H1 (cell line): ENCODE measurements at regions of chr9 and their contacts with region 1.

Region 1: DNA sequence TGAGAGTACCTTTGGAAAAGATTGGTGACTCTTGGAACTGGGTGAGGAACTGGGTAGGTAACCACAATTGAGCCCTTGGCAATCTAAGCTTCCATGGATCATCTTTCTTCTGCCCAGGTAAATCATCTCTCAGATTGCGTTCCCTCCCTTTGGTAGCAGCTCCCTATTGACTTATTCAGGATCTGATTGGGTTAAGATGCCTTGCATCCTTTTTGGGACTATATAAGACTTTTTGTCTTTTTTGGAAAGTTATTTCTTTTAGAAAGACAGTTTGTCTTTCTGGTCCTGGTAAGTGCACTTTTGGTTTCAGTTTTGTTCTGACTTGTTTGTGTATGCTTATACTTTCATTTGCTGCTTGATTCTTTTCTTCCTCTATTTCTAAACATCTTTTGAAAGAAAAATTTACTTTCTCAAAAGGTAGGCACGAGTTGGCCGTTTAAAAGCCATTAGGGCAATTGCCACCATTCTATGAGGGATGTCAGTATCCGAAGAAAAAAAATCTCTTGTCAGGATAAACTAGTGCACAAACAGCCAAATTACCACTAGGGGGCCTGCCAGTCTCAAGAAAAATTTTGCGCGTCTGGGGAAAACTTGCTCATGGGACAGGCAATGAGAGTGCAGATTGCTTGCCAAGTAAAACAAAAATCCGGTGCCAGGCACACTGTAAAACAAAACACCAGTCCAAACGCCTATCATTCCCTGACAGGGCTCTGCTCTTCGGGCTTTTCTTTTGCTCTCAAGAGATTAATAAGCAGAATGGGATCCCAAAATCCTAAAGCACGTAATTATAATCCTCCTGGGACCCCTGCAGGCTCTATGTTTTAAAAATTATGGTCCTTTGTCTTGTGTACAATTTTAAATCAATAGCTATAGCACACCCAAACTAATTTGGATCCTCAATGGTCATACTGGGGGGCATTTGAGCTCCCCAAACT is 12.8 kb downstream of the OR1J1 start:
- DNase-seq: peak; percentile 31 to 54
- H3K4me3 ChIP-seq: no peak overlapping the region
- H3K27ac ChIP-seq: no peak overlapping the region
- H3K4me1 ChIP-seq: no peaks in the 10 kb centered on the region; a peak in 1 of 7 replicates
- H3K27me3 ChIP-seq: no peaks in the 10 kb centered on the region; a peak in 1 of 7 replicates
- CTCF ChIP-seq: peak; percentile 28 to 74 (median 71)
- EP300 ChIP-seq: no peak
- POLR2A ChIP-seq: no peak
- RAD21 ChIP-seq: peak; percentile 80 to 85

Region 2: GRCh38 chr9:122453677-122454135 is 11.2 kb before region 1 on chr9:
- CTCF ChIA-PET with region 1: interaction called, 10 read pairs
- POLR2A ChIA-PET with region 1: no interaction called
- DNase-seq: no peak
- H3K4me3 ChIP-seq: no peak overlapping the region
- H3K27ac ChIP-seq: no peak overlapping the region
- H3K4me1 ChIP-seq: no peaks in the 10 kb centered on the region
- H3K27me3 ChIP-seq: no peaks in the 10 kb centered on the region
- CTCF ChIP-seq: no peak
- EP300 ChIP-seq: no peak
- POLR2A ChIP-seq: no peak
- RAD21 ChIP-seq: no peak